ENCODE measurements at regions of chr1 and their contacts with region 1.

Region 1: GRCh38 chr1:115138968-115139367 is 49.7 kb upstream of the TSPAN2 start:
- DNase-seq: peak; percentile 83
- ATAC-seq: peak; percentile 98
- H3K4me3 Mint-ChIP-seq: no peak overlapping the region
- H3K27ac Mint-ChIP-seq: no peak overlapping the region
- H3K4me1 Mint-ChIP-seq: peaks cover 4% of the 10 kb centered on the region; the same call in 1 of the 2 replicates
- H3K27me3 Mint-ChIP-seq: no peaks in the 10 kb centered on the region; the same call in none of the 2 replicates
- CTCF ChIP-seq: peak; percentile 66

Region 2: GRCh38 chr1:115184951-115185331 is 46.0 kb after region 1 on chr1:
- CTCF ChIA-PET with region 1: interaction called, 29 read pairs
- POLR2A ChIA-PET with region 1: no interaction called
- DNase-seq: no peak
- ATAC-seq: no peak
- H3K4me3 Mint-ChIP-seq: no peak overlapping the region
- H3K27ac Mint-ChIP-seq: no peak overlapping the region
- H3K4me1 Mint-ChIP-seq: peaks cover 6% of the 10 kb centered on the region
- H3K27me3 Mint-ChIP-seq: no peaks in the 10 kb centered on the region
- CTCF ChIP-seq: no peak

Region 3: DNA sequence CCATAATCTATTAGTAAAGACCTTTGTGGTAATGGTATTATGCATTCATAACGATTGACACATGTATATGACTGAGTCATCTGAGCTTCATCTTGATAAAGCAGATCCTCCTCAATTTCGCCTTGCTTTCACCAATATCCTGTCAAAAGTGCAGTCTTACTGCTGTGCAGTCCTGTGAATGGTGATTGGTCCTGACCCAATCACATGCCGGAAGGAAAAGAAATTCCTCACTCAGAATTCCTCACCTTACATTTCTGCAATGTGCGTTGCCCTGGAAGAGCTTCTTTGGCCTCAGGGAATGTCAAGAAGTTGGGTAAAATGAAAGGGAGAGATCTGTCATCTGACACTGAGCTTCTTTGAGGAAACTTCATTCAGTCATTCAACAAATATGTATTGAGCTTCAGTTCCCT is 71.3 kb after region 1 on chr1:
- CTCF ChIA-PET with region 1: no interaction called
- POLR2A ChIA-PET with region 1: no interaction called
- DNase-seq: no peak
- ATAC-seq: no peak
- H3K4me3 Mint-ChIP-seq: no peak overlapping the region
- H3K27ac Mint-ChIP-seq: no peak overlapping the region
- H3K4me1 Mint-ChIP-seq: peaks cover 7% of the 10 kb centered on the region; the same call in 1 of the 2 replicates
- H3K27me3 Mint-ChIP-seq: no peaks in the 10 kb centered on the region
- CTCF ChIP-seq: no peak

Region 4: DNA sequence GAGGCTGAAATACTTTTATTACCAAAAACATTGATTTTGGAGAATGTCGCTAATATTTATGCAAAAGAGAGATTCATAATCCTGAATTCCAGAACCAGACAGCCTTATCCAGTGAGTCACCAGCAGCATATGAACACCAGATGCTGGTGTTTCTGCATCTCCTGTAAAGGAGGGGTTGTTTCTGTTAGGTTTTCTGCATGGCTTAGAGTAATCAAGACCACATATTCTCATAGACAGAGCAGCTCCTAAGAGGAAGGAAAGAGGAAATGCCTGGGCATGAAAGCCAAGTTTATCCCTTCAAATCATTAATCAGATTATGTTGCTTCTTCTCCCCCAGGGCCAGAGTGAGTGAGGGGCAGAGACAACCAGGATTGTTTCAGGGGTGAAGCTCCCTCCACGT is 112.9 kb after region 1 on chr1:
- CTCF ChIA-PET with region 1: no interaction called
- POLR2A ChIA-PET with region 1: no interaction called
- DNase-seq: no peak
- ATAC-seq: no peak
- H3K4me3 Mint-ChIP-seq: no peak overlapping the region
- H3K27ac Mint-ChIP-seq: no peak overlapping the region
- H3K4me1 Mint-ChIP-seq: no peaks in the 10 kb centered on the region
- H3K27me3 Mint-ChIP-seq: no peaks in the 10 kb centered on the region
- CTCF ChIP-seq: no peak

Region 5: DNA sequence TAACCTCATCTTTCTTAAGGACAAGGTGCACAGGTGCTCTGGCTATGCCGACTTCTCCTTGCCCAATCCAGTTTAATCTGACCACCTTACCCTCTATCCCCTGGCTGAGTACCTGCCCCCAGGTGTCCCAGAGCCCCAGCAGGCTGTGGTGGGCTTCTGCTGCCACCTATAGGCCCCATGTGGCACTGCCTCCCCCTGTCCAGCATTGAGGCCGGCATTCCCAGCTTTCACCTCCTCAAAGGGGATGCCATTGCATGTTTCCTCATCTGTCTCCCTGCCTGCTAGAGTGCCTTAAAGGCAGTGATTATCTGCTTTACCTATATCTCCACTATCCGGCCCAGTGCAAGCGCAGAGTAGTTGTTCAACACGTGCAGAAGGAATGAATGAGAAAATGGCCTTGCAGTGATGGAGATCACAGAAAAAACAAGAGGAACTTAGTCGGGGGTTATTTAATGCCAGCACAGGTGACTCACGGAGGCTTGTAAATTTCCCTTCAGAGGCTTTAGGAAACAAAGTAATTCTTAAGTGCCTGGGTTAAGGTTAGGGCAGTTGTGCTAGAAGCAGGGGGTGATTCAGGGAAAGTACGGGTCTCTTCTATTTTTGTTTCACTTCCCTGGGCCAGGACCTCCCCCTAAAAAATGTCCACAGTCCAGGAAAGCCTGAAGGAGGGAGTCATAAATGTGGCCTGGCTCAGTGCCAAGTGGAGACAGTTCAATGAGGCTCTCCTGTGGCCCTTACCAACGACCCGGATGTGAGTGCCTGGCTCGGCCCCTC is 330.9 kb after region 1 on chr1:
- CTCF ChIA-PET with region 1: interaction called, 36 read pairs
- POLR2A ChIA-PET with region 1: interaction called, 6 read pairs
- DNase-seq: peak; percentile 88
- ATAC-seq: peak; percentile 96
- H3K4me3 Mint-ChIP-seq: no peak overlapping the region
- H3K27ac Mint-ChIP-seq: no peak overlapping the region; the same call in 1 of the 2 replicates
- H3K4me1 Mint-ChIP-seq: peaks cover 3% of the 10 kb centered on the region; the same call in 1 of the 2 replicates
- H3K27me3 Mint-ChIP-seq: no peaks in the 10 kb centered on the region
- CTCF ChIP-seq: peak; percentile 85